ENCODE measurements at regions of chr14 and their contacts with region 1.

Region 1: GRCh38 chr14:64891839-64892375 is 12.2 kb upstream of the SPTB start:
- DNase-seq: peak; percentile 88
- ATAC-seq: peak; percentile 100
- H3K4me3 ChIP-seq: no peak overlapping the region
- H3K27ac ChIP-seq: no peak overlapping the region
- H3K4me1 ChIP-seq: no peaks in the 10 kb centered on the region
- H3K27me3 ChIP-seq: no peaks in the 10 kb centered on the region
- CTCF ChIP-seq: peak; percentile 85

Region 2: DNA sequence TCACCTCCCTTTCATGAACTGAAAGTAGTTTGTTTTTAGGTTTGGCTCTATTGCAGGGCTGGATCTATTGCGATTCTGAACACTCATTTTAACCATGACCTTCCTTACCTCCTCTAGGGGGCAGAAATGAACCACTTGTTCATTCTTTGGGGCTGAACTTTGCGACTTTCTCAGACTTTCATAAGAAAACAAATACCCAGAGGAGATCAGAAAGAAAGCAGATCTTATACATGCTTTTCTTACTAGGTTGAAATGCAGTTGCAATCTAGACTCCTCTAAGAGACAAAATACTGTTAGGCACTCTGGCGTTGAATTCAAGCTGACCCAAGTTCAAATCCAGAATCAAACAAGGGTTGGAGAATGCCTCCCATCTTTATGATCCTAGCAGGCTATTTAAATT is 220.3 kb before region 1 on chr14:
- CTCF ChIA-PET with region 1: interaction called, 3 read pairs
- POLR2A ChIA-PET with region 1: no interaction called
- intact Hi-C with region 1: loop called (anchors 5 kb)
- DNase-seq: peak; percentile 78
- ATAC-seq: peak; percentile 73
- H3K4me3 ChIP-seq: no peak overlapping the region
- H3K27ac ChIP-seq: no peak overlapping the region
- H3K4me1 ChIP-seq: peaks cover 16% of the 10 kb centered on the region
- H3K27me3 ChIP-seq: no peaks in the 10 kb centered on the region
- CTCF ChIP-seq: peak; percentile 93

Region 3: GRCh38 chr14:64772393-64772950 is 119.4 kb before region 1 on chr14:
- CTCF ChIA-PET with region 1: interaction called, 10 read pairs
- POLR2A ChIA-PET with region 1: no interaction called
- intact Hi-C with region 1: no loop called
- DNase-seq: no peak
- ATAC-seq: peak; percentile 63
- H3K4me3 ChIP-seq: no peak overlapping the region
- H3K27ac ChIP-seq: no peak overlapping the region
- H3K4me1 ChIP-seq: no peaks in the 10 kb centered on the region
- H3K27me3 ChIP-seq: no peaks in the 10 kb centered on the region
- CTCF ChIP-seq: peak; percentile 45

Region 4: DNA sequence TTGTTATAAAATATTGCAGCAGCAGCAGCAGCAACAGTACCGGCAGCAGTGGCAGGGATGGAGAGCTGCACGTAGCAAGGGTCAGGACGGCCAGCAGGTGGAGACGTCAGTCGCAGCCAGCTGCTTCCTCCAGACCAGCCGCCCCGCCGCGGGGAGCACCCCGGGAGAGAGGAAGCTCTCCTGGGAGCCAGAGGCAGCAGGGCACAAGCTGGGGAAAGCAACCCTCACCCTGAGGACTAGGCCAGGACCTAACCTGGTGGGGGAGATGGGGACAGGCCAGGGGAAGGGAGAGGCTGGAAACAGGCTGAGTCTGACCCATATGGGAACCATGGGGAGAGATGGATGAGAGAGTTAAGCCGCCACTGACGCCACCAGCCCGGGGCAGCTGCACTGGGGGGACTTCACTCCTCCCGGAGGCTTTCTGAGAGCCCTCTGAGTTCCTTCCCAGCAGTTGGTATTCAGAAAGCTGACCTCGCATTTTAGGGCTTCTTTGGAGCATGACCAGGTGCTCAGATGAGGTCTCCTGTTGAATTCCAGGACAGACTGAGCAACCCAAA is 68.5 kb before region 1 on chr14:
- CTCF ChIA-PET with region 1: interaction called, 67 read pairs
- POLR2A ChIA-PET with region 1: no interaction called
- intact Hi-C with region 1: loop called (anchors 5 kb)
- DNase-seq: peak; percentile 83
- ATAC-seq: peak; percentile 99
- H3K4me3 ChIP-seq: peak overlapping the region; percentile 47
- H3K27ac ChIP-seq: no peak overlapping the region
- H3K4me1 ChIP-seq: no peaks in the 10 kb centered on the region; the same call in 1 of the 2 replicates
- H3K27me3 ChIP-seq: no peaks in the 10 kb centered on the region
- CTCF ChIP-seq: peak; percentile 90

Region 5: DNA sequence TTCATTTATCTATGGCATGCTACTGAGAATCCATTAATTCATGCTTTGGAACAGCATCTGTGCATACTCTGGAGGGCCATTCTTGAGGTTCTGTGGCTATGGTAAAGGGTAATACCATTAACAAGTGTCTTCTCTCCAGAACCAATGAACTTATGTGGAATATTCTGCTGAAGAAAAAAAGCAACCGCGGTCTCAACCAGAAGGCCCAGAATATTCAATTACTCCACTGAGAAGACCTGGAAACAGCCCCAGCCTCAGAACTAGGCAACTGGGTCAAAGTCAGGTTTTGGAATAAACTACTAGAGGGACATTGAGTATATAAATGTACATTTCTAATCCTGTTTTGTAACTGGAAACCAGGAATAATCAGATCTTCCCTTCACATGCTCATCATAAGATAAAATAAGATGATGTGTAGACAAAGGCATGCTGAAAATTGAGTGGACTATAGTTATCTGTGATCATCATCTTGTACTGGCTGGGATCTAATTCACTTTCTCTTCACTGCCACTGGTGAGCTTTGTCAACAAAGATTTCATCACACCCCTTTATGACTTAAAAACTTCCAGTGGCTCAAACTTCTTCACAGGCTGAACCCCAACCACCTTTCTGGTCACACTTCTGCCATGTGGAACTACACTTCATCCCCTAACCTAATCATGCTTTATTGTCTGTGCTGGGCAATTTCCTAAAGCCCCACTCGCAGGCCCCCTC is 18.2 kb before region 1 on chr14:
- CTCF ChIA-PET with region 1: no interaction called
- POLR2A ChIA-PET with region 1: no interaction called
- intact Hi-C with region 1: no loop called
- DNase-seq: no peak
- ATAC-seq: no peak
- H3K4me3 ChIP-seq: no peak overlapping the region
- H3K27ac ChIP-seq: no peak overlapping the region
- H3K4me1 ChIP-seq: no peaks in the 10 kb centered on the region
- H3K27me3 ChIP-seq: peaks cover 78% of the 10 kb centered on the region
- CTCF ChIP-seq: no peak